Activated T-helper 2 cell treated with anti-CD3 and anti-CD28 coated beads, Interferon-gamma antibody, Interleukin-2, Interleukin-4, amounts not matched to agents 10 μg/mL and 5 μg/mL and 100 μg/mL, durations not matched to agents 14 hours and 24 hours and 36 hours (primary cell): ENCODE measurements at regions of chr1 and their contacts with region 1.

Region 1: GRCh38 chr1:210251680-210252490 is 19.3 kb downstream of the SERTAD4 start:
- DNase-seq: no peak
- H3K4me3 Mint-ChIP-seq: no peak overlapping the region
- H3K27ac Mint-ChIP-seq: no peak overlapping the region
- H3K4me1 Mint-ChIP-seq: peaks cover 6% of the 10 kb centered on the region
- H3K27me3 Mint-ChIP-seq: peaks cover 66% of the 10 kb centered on the region

Region 2: GRCh38 chr1:210233216-210234020 is 18.5 kb before region 1 on chr1:
- intact Hi-C with region 1: loop called (anchors 2 kb)
- DNase-seq: no peak
- H3K4me3 Mint-ChIP-seq: no peak overlapping the region
- H3K27ac Mint-ChIP-seq: no peak overlapping the region
- H3K4me1 Mint-ChIP-seq: peaks cover 8% of the 10 kb centered on the region
- H3K27me3 Mint-ChIP-seq: peaks cover 62% of the 10 kb centered on the region

Region 3: DNA sequence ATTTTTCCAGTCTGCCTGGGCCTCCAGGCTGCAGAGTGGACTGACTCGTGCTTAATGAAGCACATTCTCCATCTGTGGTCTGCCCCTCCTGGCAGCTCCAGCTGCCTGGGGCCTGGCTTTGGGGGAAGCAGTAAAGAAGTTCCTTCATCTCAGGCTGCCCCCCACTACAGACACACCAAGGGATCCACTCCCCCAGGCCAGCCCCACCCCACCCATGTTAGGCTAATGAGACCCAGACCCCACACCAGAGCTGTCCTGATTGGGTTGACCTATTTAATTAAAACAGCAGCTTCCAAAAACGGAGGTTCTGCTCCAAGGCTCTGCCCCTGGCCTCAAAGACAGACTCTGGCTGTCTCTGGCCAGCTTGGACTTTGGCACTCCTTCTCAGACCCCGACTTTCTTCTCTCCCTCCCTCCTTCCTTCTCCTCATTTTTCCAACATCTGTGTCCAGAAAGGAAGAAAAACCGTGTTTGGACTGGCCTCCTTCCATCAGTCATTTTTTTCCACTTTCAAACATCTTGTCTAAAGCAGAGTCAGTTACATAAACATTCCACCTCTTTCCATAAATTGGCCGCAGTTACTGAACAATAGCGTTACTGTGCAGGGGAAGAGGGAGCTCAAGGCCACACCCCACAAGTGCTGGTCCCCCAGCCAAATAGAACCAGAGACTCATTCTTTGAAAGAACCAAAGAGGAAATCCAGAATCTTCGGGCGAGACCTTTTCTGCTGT is 10.4 kb after region 1 on chr1:
- intact Hi-C with region 1: no loop called
- DNase-seq: no peak
- H3K4me3 Mint-ChIP-seq: no peak overlapping the region
- H3K27ac Mint-ChIP-seq: no peak overlapping the region
- H3K4me1 Mint-ChIP-seq: no peaks in the 10 kb centered on the region
- H3K27me3 Mint-ChIP-seq: peaks cover 4% of the 10 kb centered on the region